Activated CD4-positive, alpha-beta T cell treated with anti-CD3 and anti-CD28 coated beads for 36 hours (primary cell): ENCODE measurements at regions of chr5 and their contacts with region 1.

Region 1: GRCh38 chr5:177006265-177006972 is at the start of gene UIMC1:
- DNase-seq: peak; percentile 96
- ATAC-seq: peak; percentile 90
- H3K4me3 Mint-ChIP-seq: peak within 1 kb of the TSS; percentile 87
- H3K27ac Mint-ChIP-seq: peak within 1 kb of the TSS; percentile 96
- H3K4me1 Mint-ChIP-seq: peaks cover 26% of the 10 kb centered on the region
- H3K27me3 Mint-ChIP-seq: no peaks in the 10 kb centered on the region
- total RNA-seq, gene UIMC1: 50.4 to 53.4 TPM

Region 2: DNA sequence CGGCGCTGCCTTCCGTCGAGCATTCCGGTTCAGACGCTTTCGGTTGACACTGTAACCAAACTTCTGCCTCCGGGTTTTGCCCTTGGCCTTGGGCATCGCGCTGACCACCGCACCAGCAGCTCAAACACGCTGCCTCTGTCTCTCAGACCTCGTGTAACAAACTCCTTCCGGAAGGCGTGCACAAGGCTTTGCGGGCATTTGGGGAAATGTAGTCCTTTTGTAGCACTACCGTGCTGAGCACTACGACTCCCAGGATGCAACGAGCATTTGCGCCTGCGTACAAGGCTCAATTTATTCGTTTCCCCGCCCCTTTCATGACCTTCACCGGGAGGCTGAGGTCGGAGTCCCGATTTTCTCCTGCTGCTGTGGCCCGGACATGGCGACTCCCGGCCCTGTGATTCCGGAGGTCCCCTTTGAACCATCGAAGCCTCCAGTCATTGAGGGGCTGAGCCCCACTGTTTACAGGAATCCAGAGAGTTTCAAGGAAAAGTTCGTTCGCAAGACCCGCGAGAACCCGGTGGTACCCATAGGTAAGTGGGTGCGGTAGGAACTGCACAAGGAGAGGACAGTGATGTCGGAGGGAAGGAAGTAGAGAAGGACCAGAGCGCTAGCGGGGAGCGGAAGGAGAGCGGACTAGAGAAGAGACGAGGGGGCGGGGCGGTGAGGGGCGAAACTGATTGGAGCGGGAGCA is 617.8 kb before region 1 on chr5 and contains the starts of genes HIGD2A and NOP16:
- CTCF ChIA-PET with region 1: no interaction called
- POLR2A ChIA-PET with region 1: no interaction called
- intact Hi-C with region 1: loop called in 1 of 2 experiments (anchors 2 kb)
- DNase-seq: peak; percentile 100
- ATAC-seq: peak; percentile 93
- H3K4me3 Mint-ChIP-seq: peak within 1 kb of the TSS; percentile 95
- H3K27ac Mint-ChIP-seq: peak within 1 kb of the TSS; percentile 100
- H3K4me1 Mint-ChIP-seq: peaks cover 31% of the 10 kb centered on the region
- H3K27me3 Mint-ChIP-seq: no peaks in the 10 kb centered on the region
- total RNA-seq, gene HIGD2A: 104 to 140 TPM
- total RNA-seq, gene NOP16: 54.3 to 65.4 TPM

Region 3: GRCh38 chr5:176481711-176482110 is 524.7 kb before region 1 on chr5:
- CTCF ChIA-PET with region 1: no interaction called
- POLR2A ChIA-PET with region 1: no interaction called
- intact Hi-C with region 1: no loop called
- DNase-seq: peak; percentile 10
- ATAC-seq: peak; percentile 76
- H3K4me3 Mint-ChIP-seq: no peak overlapping the region
- H3K27ac Mint-ChIP-seq: peak overlapping the region; percentile 13
- H3K4me1 Mint-ChIP-seq: peaks cover 23% of the 10 kb centered on the region
- H3K27me3 Mint-ChIP-seq: no peaks in the 10 kb centered on the region

Region 4: DNA sequence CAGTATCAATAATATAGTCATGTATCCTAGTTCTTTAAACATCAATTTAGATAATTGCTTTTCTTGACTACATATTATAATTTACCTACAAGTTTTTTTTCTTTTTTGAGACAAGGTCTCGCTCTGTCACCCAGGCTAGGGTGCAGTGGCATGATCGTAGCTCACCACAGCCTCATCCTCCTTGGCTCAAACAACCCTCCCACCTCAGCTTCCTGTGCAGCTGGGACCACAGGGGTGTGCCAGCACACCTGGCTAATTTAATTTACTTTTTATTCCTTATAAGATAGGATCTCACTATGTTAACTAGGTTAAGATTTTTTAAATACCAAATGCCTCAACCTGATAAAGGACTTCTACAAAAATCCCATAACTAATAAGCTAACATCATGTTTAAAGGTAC is 20.9 kb before region 1 on chr5:
- CTCF ChIA-PET with region 1: interaction called, 11 read pairs
- POLR2A ChIA-PET with region 1: no interaction called
- intact Hi-C with region 1: no loop called
- DNase-seq: peak; percentile 30
- ATAC-seq: peak; percentile 66
- H3K4me3 Mint-ChIP-seq: no peak overlapping the region
- H3K27ac Mint-ChIP-seq: no peak overlapping the region
- H3K4me1 Mint-ChIP-seq: peaks cover 24% of the 10 kb centered on the region
- H3K27me3 Mint-ChIP-seq: no peaks in the 10 kb centered on the region

Region 5: DNA sequence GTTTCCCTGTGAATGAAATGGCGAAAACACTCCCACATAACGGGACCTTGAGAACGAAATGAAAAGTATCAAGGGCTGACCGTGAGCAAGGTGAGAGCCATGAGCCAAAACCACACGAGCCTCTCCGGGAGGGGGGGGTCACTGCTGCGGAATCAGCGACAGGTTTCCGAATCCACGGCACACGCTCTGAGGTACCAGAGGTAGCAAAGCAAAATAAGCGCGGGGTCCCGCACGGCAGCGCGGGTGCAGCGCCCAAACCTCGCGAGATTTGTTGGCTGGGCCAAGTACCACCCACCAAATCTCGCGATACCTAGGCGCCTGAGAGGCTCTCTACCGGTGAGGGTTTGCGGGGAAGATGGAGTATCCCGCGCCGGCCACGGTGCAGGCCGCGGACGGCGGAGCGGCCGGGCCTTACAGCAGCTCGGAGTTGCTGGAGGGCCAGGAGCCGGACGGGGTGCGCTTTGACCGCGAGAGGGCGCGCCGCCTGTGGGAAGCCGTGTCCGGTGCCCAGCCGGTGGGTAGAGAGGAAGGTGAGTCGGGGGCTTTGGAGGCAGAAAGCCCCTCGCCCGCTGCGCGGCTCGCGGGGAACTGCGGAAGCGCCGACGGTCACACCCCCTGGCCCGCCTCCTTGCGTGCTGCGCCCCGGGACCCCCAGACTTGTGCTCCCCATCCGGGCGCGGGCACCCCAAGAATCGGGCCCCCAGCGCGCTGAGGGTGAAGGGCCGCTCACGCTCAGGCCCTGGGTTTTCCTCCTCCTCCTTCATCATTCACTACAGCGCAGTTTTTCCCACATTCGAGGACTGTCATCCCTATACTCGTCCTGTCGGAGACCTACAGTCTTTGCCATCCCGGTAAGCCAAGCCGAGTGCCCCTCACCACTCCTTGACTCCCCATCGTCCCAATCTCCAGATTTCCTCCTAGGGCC is 16.2 kb after region 1 on chr5 and contains the start of gene ZNF346:
- CTCF ChIA-PET with region 1: interaction called, 9 read pairs
- POLR2A ChIA-PET with region 1: interaction called, 7 read pairs
- intact Hi-C with region 1: loop called (anchors 1 kb)
- DNase-seq: peak; percentile 97
- ATAC-seq: peak; percentile 97
- H3K4me3 Mint-ChIP-seq: peak within 1 kb of the TSS; percentile 91
- H3K27ac Mint-ChIP-seq: peak within 1 kb of the TSS; percentile 95
- H3K4me1 Mint-ChIP-seq: peaks cover 34% of the 10 kb centered on the region
- H3K27me3 Mint-ChIP-seq: no peaks in the 10 kb centered on the region
- total RNA-seq, gene ZNF346: 16.5 to 23.3 TPM

Region 6: DNA sequence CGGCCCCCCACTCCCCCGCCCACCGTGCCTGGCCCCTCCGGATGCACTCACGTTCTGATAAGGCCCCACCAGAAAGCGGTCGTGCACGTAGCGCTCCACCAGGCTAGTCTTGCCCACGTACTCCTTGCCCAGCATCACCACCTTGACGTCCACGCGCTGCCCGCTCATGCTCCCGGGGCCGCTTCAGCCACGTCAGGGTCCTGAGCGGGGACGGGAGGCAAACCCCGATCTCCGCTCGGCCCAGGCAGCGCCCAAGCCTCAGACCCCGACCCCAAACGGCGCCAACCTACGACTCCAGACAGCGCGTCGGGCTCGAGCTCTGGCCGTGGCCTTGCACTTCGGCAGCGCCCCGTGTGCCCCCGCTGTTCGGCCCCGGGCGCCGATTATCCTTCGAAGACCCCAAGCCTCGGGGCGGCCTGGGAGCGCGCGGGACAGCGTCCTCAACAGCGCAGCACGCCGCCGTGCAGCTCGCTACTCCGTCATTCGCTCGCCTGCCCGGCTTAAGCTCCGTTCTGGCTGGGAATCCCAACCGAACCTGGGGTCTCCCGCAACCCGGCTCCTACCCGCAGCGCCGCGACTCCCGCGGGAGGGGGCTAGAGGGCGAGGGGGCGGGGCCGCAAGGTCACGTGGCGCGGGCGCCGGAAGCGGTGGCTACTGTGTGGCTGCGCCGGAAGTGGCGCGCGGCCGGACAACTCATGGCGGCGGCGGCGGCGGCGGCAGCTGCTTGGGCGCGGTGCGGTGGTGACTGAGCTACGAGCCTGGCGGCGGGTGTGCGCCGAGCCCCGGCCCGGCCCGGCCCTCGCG is 296.9 kb after region 1 on chr5 and contains the starts of genes PRELID1 and RAB24:
- CTCF ChIA-PET with region 1: no interaction called
- POLR2A ChIA-PET with region 1: no interaction called
- intact Hi-C with region 1: loop called in 1 of 2 experiments (anchors 5 kb)
- DNase-seq: peak; percentile 95
- ATAC-seq: peak; percentile 69
- H3K4me3 Mint-ChIP-seq: peak within 1 kb of the TSS; percentile 93
- H3K27ac Mint-ChIP-seq: peak within 1 kb of the TSS; percentile 90
- H3K4me1 Mint-ChIP-seq: peaks cover 59% of the 10 kb centered on the region
- H3K27me3 Mint-ChIP-seq: no peaks in the 10 kb centered on the region
- total RNA-seq, gene PRELID1: 266 to 362 TPM
- total RNA-seq, gene RAB24: 10.9 to 21.0 TPM